ENCODE measurements at regions of chr15 and their contacts with region 1.

Region 1: DNA sequence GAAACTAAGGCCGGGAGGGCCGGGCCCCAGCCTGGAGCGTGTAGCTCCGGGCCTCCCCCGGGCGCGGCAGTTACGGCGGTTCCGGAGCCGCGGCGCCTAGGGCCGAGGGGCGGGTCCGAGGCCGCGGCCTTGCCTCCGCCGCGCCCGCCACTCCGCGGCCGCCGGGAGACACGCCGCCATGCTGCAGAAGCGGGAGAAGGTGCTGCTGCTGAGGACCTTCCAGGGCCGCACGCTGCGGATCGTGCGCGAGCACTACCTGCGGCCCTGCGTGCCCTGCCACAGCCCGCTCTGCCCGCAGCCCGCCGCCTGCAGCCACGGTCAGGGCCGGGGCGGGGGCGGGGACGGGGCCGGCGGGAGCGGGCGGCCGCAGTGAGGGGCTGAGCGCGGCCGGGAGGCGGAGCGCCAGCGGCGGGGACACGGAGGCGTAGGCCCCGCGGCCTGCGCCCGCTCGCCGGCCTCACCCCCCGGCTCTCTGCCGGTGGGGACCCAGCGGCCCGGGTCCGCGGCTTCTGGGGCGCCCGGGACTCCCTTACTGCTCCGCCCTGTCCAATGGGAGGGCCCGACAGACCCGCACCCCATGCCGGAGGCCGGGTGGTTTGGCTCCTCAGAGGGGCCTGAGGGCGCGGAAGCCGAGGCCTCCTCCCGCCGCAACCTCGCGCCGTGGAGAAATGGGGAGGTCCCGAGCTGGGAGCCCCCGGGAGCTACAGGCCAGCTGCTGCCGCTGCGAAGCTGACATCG is at the start of gene DIS3L:
- DNase-seq: peak; percentile 83
- total RNA-seq, gene DIS3L: 30.9 TPM

Region 2: GRCh38 chr15:65638681-65639089 is 654.9 kb before region 1 on chr15:
- intact Hi-C with region 1: loop called (anchors 10 kb)
- DNase-seq: no peak

Region 3: GRCh38 chr15:65916664-65917406 is 376.8 kb before region 1 on chr15:
- intact Hi-C with region 1: loop called (anchors 5 kb)
- DNase-seq: no peak

Region 4: GRCh38 chr15:66233487-66234415 is 59.8 kb before region 1 on chr15:
- intact Hi-C with region 1: no loop called
- DNase-seq: no peak

Region 5: DNA sequence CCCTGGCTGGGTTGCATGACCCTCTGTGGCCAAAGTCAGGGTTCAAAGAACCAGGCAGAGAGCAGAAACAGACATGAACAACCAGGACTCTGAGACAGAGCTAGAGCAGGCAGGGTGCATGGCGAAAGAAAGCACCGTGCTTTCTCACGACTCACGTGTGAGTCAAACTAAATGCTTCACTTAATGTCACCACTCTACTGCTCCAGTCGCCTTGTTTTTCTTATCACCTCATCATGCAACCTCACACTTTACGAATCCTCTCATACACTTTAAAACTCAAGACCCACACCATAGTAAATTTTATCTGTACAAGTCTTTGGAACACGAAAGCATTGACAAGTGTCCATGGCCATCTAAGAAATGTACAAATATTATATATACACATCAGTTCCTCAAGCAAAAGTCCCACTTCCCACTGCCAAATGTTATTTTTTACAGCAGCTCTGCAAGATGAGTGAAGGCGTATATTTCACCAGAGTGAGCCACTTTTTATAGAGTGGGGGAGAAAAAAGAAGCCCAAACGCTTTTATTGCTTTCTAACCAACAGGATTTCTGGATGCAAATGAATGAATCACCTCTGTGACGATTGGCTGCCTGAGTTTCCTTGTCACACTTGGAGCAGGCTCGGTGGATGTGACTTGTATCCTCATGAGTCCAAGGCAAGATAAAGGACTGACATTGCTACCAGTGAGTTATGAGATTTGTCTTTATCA is 24.1 kb before region 1 on chr15:
- intact Hi-C with region 1: no loop called
- DNase-seq: no peak

Region 6: GRCh38 chr15:66386204-66387123 is 92.9 kb after region 1 on chr15 and contains the start of gene MAP2K1:
- intact Hi-C with region 1: loop called (anchors 10 kb)
- DNase-seq: peak; percentile 100
- total RNA-seq, gene MAP2K1: 38.7 TPM